ENCODE measurements at regions of chr20 and their contacts with region 1.

Region 1: GRCh38 chr20:354298-355064 is 7.6 kb downstream of the NRSN2 start:
- DNase-seq: peak; percentile 47 to 96 (median 74)

Region 2: DNA sequence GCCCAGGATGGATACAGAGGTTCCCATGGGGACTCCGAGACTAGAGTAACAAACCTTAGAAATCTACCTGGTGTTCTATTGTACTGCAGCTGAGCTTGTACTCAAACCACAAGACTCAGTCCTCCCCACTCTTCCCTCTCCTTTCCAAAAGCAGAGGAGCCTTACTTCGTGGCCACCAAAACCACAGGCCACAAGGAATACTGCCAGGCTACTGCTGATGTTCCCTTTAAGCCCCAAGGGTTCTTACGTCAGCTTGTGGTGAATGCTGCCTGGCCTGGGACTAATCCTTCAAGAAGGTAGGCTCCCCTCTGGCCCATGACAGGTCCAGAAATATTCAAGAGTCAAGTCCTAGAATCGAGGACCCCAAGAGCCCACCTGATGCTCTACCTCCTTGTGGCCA is 154.5 kb before region 1 on chr20:
- intact Hi-C with region 1: no loop called
- DNase-seq: no peak

Region 3: DNA sequence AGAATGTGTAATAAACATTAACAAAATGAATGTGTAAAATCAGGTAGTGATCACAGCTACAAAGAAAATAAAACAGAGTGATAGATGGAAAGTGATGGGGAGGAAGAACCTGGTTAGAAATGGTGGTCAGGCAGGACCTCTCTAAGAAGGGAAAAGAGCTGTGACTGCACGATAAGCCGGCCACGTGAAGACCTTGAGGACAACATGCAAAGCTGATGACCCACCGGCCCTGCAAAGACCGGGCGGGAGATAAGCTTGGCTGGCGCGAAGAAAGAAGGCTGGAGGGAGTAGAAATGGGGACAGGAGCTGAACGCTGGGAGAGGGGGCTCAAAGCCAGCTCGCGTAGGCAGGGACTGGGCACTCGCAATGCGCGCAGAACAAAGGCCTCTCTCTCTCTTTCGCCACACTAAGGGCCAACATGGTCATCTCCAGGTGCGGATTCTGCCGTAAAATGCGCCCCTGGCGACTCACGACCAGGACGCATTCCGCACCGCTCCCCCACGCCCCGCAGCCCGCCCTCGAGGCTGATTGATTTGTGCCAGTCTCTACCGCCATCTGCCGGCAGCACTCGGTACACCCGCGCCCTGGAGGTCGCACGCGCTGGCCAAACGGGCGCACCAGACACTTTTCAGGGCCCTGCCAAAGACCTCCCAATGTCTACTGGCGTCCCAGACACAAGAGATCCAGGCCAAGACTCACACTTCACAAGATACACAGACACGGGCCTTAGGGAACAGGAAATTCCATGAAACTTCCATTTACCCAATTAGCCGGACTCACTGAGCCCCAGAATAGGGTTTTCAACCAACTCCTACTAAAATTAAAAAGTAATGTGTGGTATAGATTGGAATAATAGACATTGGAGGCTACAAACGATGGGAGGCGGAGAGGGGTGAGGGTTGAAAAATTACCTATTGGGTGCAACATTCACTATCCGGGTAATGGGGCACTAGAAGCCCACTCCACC is 87.6 kb before region 1 on chr20:
- intact Hi-C with region 1: no loop called
- DNase-seq: peak; percentile 66 to 97 (median 86)

Region 4: GRCh38 chr20:407133-407952 is 52.9 kb after region 1 on chr20:
- intact Hi-C with region 1: loop called (anchors 10 kb)
- DNase-seq: peak; percentile 44 to 96 (median 70)

Region 5: DNA sequence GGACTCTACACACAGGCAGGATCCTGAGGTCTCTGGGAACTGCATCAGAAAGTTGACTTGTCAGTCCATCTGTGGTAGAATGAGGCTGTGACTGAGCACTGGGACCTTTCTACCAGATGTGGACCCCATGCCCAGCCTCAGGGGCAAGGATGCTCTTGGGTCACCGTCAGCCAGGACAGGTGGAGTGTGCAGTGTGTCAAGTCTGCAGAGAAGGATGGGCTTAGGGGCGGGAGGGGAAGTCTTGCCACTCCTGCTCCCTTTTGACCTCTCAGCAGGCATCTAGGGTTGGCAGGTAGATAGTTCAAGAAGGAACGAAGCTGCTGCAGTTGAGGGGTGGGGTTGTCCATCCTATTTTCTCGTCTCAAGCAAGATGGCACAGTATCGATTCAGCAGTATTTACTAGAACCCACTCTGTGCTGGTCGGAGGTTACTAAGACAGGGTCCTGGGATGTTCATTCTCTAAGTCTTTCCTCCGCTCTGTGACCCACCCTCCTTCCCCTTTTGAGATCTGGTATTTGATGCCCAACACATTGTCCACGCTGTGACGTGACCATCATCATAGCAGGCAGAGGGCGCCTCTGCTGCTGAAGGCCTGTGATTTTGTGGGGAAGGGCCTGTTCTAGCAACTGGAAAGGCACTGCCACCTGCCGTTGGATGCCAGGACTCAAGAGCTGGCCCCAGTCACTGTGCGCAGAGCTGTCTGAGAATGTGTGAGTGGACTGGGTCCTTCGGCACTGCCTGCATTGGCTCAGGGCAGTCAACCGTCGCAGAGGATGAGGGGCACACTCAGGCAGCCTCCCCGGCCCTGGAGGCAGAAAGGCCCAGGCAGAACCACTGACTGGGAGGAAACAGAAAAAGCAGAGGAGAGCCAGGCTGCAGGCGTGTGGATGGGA is 76.8 kb after region 1 on chr20:
- intact Hi-C with region 1: loop called (anchors 1 kb)
- DNase-seq: peak; percentile 69 to 97 (median 84)

Region 6: DNA sequence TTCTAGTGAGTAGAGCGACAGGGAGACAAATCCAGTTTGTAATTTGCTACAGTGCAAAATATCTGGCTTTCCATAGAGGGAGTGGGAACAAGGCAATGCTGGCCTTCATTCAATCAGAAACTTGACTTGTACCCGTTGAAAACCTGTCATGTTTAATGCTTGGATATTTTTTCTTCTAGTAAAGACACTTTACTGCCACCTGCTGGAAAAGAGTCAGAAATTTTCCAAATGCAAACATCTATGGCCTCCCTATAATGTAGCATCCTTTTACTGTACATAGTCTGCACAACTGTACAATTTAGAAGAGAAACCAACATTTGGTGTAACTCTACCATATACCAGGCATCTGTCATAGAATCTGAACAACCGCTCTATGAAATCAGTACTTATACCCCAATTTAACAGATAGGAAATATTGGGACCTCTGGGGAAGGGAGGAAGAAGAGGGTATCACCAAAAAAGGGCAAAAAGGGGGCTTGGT is 124.5 kb after region 1 on chr20:
- intact Hi-C with region 1: loop called (anchors 1 kb)
- DNase-seq: no peak

Region 7: GRCh38 chr20:504632-505075 is 150.2 kb after region 1 on chr20:
- intact Hi-C with region 1: no loop called
- DNase-seq: no peak

Region 8: GRCh38 chr20:645318-646106 is 291.0 kb after region 1 on chr20:
- intact Hi-C with region 1: loop called (anchors 10 kb)
- DNase-seq: peak; percentile 46 to 96 (median 72)

Region 9: GRCh38 chr20:733861-734260 is 379.4 kb after region 1 on chr20:
- intact Hi-C with region 1: no loop called
- DNase-seq: no peak